Aorta (tissue), 5 donors: ENCODE measurements at regions of chr2 and their contacts with region 1.

Region 1: DNA sequence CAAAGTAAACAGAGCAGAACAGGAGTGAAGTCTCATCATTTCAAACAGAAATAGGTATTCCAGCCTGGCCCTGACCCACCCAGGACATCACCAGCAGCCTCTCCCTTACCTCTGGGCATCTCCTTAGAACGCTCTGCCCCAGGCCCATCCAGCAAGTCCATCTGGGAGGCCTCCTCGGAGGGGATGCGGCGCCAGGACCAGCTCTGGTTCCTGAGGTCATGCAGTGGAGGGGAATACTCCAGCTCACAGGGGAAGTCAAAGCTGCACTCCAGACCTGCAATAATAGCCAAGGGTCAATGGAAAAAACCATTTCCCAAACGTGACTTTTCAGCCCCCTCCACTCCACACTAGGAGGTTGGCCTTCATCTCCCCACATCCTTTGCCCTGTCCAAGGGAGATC is 226.6 kb downstream of the ALK start:
- DNase-seq: no peak
- ATAC-seq: no peak
- H3K4me3 ChIP-seq: no peak overlapping the region
- H3K27ac ChIP-seq: no peak overlapping the region
- H3K4me1 ChIP-seq: no peaks in the 10 kb centered on the region
- H3K27me3 ChIP-seq: no peaks in the 10 kb centered on the region

Region 2: GRCh38 chr2:29469516-29469915 is 225.2 kb before region 1 on chr2:
- intact Hi-C with region 1: no loop called
- DNase-seq: no peak
- ATAC-seq: no peak
- H3K4me3 ChIP-seq: no peak overlapping the region
- H3K27ac ChIP-seq: no peak overlapping the region
- H3K4me1 ChIP-seq: no peaks in the 10 kb centered on the region
- H3K27me3 ChIP-seq: no peaks in the 10 kb centered on the region

Region 3: DNA sequence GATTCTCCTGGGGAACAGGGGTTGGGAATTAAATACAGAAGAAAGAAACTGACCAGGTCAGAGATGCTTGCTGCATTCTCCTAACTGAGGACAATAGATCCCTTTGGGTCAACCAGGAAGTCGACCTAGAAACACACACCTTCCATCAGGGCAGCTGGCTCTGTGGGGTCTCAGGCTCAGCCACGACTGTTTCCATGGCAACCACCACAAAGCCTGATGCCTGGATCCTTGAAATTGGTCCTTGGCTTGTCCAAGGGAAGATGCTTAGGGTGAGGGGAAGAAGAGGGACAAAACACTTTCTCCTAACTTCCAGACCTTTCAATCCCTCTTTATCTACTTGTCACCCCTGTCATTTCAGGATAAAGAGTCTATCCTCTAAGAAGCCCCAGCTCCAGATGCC is 32.2 kb after region 1 on chr2:
- intact Hi-C with region 1: loop called in 1 of 2 experiments (anchors 2 kb)
- DNase-seq: no peak
- ATAC-seq: no peak
- H3K4me3 ChIP-seq: no peak overlapping the region
- H3K27ac ChIP-seq: no peak overlapping the region
- H3K4me1 ChIP-seq: no peaks in the 10 kb centered on the region
- H3K27me3 ChIP-seq: peaks cover 0 to 2% of the 10 kb centered on the region in 2 donors

Region 4: DNA sequence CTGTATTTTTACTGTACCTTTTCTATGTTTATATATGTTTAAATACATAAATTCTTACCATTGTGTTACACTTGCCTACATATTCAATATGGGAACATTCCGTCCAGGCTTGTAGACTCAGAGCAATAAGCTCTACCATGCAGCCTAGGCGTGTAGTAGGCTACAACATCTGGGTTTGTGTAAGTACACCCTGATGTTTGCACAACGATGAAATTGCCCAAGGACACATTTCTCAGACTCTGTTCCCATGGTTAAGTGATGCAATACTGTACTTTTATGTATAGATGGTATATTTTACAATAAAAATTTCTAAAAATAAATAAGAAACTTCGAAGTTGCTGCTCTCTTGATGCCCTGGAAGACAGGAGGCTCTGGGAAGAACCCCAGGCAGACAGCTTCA is 490.4 kb after region 1 on chr2:
- intact Hi-C with region 1: no loop called
- DNase-seq: no peak
- ATAC-seq: no peak
- H3K4me3 ChIP-seq: no peak overlapping the region
- H3K27ac ChIP-seq: no peak overlapping the region
- H3K4me1 ChIP-seq: no peaks in the 10 kb centered on the region
- H3K27me3 ChIP-seq: no peaks in the 10 kb centered on the region